ENCODE measurements at regions of chr6 and their contacts with region 1.

Region 1: DNA sequence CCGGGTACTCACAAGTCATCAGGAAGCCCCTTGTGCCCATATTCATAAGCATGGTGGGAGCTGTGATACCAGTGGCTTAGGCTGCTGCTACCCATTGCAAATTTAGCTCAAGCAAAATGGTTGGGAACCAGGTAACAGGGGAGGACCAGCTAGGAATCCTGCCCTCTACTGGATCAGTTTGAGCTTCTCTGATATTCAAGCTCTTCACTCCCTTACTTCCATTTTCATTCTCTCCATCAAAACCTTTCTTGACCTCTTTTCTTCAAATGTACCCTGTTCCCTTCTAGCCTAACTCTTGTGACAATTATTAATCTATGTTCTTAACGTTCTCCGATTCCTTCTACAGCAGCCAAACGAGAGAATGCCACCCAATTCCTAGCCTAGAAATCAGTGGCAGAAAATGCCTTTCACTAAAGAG is 9.7 kb downstream of the NOL7 start:
- DNase-seq: no peak
- ATAC-seq: peak; percentile 94
- H3K4me3 ChIP-seq: no peak overlapping the region
- H3K27ac ChIP-seq: no peak overlapping the region
- H3K4me1 ChIP-seq: no peaks in the 10 kb centered on the region
- H3K27me3 ChIP-seq: no peaks in the 10 kb centered on the region
- CTCF ChIP-seq: peak; percentile 46 to 67 (median 62)
- EP300 ChIP-seq: no peak
- POLR2A ChIP-seq: no peak
- RAD21 ChIP-seq: peak; percentile 34

Region 2: GRCh38 chr6:13635948-13636658 is 11.2 kb after region 1 on chr6:
- CTCF ChIA-PET with region 1: interaction called, 22 read pairs
- POLR2A ChIA-PET with region 1: interaction called, 4 read pairs
- RAD21 ChIA-PET with region 1: no interaction called
- SMC1A ChIA-PET with region 1: interaction called, 3 read pairs
- in situ Hi-C with region 1: no loop called
- intact Hi-C with region 1: no loop called
- DNase-seq: no peak
- ATAC-seq: no peak
- H3K4me3 ChIP-seq: no peak overlapping the region
- H3K27ac ChIP-seq: no peak overlapping the region
- H3K4me1 ChIP-seq: no peaks in the 10 kb centered on the region
- H3K27me3 ChIP-seq: no peaks in the 10 kb centered on the region
- CTCF ChIP-seq: no peak
- EP300 ChIP-seq: no peak
- POLR2A ChIP-seq: no peak
- RAD21 ChIP-seq: no peak

Region 3: GRCh38 chr6:14200047-14200446 is 575.2 kb after region 1 on chr6:
- CTCF ChIA-PET with region 1: no interaction called
- POLR2A ChIA-PET with region 1: no interaction called
- RAD21 ChIA-PET with region 1: no interaction called
- SMC1A ChIA-PET with region 1: no interaction called
- in situ Hi-C with region 1: no loop called
- intact Hi-C with region 1: no loop called
- DNase-seq: no peak
- ATAC-seq: no peak
- H3K4me3 ChIP-seq: no peak overlapping the region
- H3K27ac ChIP-seq: no peak overlapping the region
- H3K4me1 ChIP-seq: no peaks in the 10 kb centered on the region
- H3K27me3 ChIP-seq: no peaks in the 10 kb centered on the region
- CTCF ChIP-seq: no peak
- EP300 ChIP-seq: no peak
- POLR2A ChIP-seq: no peak
- RAD21 ChIP-seq: no peak

Measured in GM12878 (cell line).